ENCODE measurements at regions of chr5 and their contacts with region 1.

Region 1: GRCh38 chr5:68406767-68407241 is 191.2 kb downstream of the PIK3R1 start:
- DNase-seq: no peak
- H3K4me3 Mint-ChIP-seq: peak overlapping the region; percentile 35
- H3K27ac Mint-ChIP-seq: peak overlapping the region; percentile 72
- H3K4me1 Mint-ChIP-seq: peaks cover 25% of the 10 kb centered on the region
- H3K27me3 Mint-ChIP-seq: peaks cover 2% of the 10 kb centered on the region

Region 2: DNA sequence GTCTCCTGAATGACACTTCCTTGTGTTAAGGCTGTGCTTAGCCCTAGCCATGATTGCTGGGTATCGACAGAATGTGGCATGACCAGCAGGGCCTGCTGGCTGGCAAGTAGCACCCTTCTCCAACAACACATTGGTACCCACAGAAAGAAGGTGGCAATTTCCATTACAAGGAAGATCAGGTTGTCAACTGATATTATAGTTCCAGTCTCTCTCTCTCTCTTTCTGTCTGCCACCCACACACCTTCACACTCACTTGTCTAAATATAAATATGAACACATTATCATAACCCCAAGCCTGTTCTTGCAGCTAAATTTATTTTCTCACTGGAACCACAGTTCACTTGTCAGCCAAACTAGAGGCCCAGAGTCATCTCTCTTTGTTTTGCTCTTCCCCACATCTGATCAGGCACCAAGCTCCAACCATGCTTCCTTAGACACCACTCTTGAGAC is 599.3 kb before region 1 on chr5:
- intact Hi-C with region 1: no loop called
- DNase-seq: no peak
- H3K4me3 Mint-ChIP-seq: no peak overlapping the region
- H3K27ac Mint-ChIP-seq: no peak overlapping the region
- H3K4me1 Mint-ChIP-seq: peaks cover 3% of the 10 kb centered on the region
- H3K27me3 Mint-ChIP-seq: no peaks in the 10 kb centered on the region

Region 3: DNA sequence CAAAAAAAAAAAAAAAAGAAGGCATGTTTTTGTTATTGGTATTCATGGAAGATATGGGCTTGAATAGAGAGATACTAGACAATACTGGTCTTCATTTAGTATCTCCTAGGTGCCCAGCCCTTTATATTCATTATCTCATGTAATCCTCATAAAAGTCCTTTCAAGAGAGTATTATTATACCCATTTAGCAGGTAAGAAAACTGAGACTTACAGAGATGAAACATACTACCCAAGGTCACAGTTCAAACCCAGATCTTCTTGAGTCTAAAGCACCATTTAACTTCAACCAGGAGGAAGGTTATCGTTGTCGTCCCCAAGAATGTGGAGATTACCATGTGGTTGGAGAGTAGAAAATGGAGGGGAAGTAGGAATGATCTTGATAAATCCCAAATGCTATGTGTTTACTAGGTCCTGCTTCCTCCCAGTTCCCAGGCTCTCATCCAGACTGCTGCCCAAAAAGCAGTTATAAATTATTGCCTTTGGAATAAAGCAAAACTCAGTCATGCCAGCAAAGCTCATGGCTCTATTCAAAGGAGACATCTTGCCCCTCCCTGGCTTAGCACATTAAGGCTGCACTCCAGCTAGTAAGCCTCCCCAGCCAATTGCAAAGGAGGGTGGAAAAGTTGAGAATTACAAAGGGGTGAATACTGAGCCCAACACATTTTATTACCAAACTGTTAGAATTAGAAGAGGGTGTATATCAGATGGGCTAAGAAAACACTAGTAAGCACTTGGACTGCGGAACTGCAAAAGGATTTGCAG is 27.3 kb before region 1 on chr5:
- intact Hi-C with region 1: loop called (anchors 1 kb)
- DNase-seq: no peak
- H3K4me3 Mint-ChIP-seq: no peak overlapping the region
- H3K27ac Mint-ChIP-seq: peak overlapping the region; percentile 61
- H3K4me1 Mint-ChIP-seq: peaks cover 70% of the 10 kb centered on the region
- H3K27me3 Mint-ChIP-seq: peaks cover 2% of the 10 kb centered on the region

Region 4: GRCh38 chr5:68505917-68506860 is 99.4 kb after region 1 on chr5:
- intact Hi-C with region 1: no loop called
- DNase-seq: no peak
- H3K4me3 Mint-ChIP-seq: no peak overlapping the region
- H3K27ac Mint-ChIP-seq: no peak overlapping the region
- H3K4me1 Mint-ChIP-seq: no peaks in the 10 kb centered on the region
- H3K27me3 Mint-ChIP-seq: no peaks in the 10 kb centered on the region